ENCODE measurements at regions of chr13 and their contacts with region 1.

Region 1: DNA sequence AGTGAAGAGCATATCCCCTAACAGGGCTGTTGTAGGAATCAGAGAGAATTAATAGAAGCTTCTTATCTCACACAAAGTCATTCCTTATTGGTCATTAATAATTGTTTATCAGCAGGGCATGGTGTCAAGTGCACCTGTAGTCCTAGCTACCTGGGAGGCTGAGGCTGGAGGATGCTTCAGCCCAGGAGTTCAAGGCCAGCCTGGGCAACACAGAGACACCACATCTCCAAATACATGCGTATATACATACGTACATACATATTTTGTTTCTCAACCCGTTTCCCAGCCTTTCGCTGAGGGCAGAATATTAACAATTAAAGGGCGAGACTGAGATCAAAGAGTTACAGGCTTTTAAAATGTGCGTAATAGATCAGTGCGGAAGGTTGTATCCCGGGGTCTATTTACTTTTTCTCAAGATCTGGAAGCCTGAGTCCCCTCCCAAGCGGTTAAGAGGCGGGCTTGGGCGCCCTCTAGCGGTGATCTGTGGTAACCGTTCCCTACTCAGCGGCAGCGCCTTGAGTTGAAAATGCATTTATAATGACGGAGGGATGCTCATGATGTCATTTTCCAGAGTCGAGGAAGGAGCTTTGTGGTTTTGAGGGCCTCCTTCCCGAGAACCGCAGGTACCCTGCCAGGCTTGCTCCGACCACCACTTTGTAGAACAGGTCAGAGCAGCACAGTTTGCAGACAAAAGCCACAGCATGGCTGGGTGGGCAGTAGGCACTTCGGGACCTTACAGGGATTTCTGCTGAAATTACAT is 169.6 kb upstream of the GPR12 start:
- DNase-seq: peak; percentile 78
- ATAC-seq: peak; percentile 71
- H3K4me3 Mint-ChIP-seq: no peak overlapping the region
- H3K27ac Mint-ChIP-seq: no peak overlapping the region
- H3K4me1 Mint-ChIP-seq: no peaks in the 10 kb centered on the region
- H3K27me3 Mint-ChIP-seq: peaks cover 10% of the 10 kb centered on the region
- CTCF ChIP-seq: peak; percentile 94

Region 2: GRCh38 chr13:26707122-26708006 is 222.8 kb before region 1 on chr13:
- CTCF ChIA-PET with region 1: interaction called, 3 read pairs
- POLR2A ChIA-PET with region 1: no interaction called
- intact Hi-C with region 1: loop called (anchors 5 kb)
- DNase-seq: peak; percentile 69
- ATAC-seq: peak; percentile 89
- H3K4me3 Mint-ChIP-seq: no peak overlapping the region
- H3K27ac Mint-ChIP-seq: no peak overlapping the region
- H3K4me1 Mint-ChIP-seq: peaks cover 7% of the 10 kb centered on the region
- H3K27me3 Mint-ChIP-seq: no peaks in the 10 kb centered on the region
- CTCF ChIP-seq: peak; percentile 69

Region 3: GRCh38 chr13:26749285-26749684 is 180.9 kb before region 1 on chr13:
- CTCF ChIA-PET with region 1: no interaction called
- POLR2A ChIA-PET with region 1: no interaction called
- intact Hi-C with region 1: no loop called
- DNase-seq: no peak
- ATAC-seq: peak; percentile 61
- H3K4me3 Mint-ChIP-seq: no peak overlapping the region
- H3K27ac Mint-ChIP-seq: no peak overlapping the region
- H3K4me1 Mint-ChIP-seq: peaks cover 6% of the 10 kb centered on the region
- H3K27me3 Mint-ChIP-seq: peaks cover 18% of the 10 kb centered on the region
- CTCF ChIP-seq: no peak

Region 4: GRCh38 chr13:26872525-26873385 is 57.4 kb before region 1 on chr13:
- CTCF ChIA-PET with region 1: interaction called, 13 read pairs
- POLR2A ChIA-PET with region 1: no interaction called
- intact Hi-C with region 1: no loop called
- DNase-seq: peak; percentile 80
- ATAC-seq: peak; percentile 65
- H3K4me3 Mint-ChIP-seq: no peak overlapping the region
- H3K27ac Mint-ChIP-seq: no peak overlapping the region
- H3K4me1 Mint-ChIP-seq: no peaks in the 10 kb centered on the region
- H3K27me3 Mint-ChIP-seq: no peaks in the 10 kb centered on the region
- CTCF ChIP-seq: peak; percentile 72

Region 5: DNA sequence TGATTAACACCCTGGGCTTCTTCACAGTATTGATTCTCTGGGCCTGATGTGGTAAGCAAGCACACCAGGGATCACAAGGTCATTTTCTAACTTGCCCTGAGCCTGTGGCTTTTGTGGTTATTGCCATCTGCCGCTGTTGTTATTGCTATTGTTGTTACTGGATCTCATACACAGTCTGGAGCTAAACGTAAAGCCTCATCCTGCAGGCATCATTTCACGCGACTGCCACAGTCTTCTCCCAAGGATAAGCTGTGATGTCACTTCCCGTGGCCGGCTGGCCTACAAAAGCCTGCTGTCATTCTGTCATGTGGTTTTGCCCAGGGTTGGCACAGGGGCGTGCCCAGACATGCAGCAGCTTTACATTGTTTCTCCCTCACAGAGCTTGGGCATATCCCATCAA is 15.5 kb before region 1 on chr13:
- CTCF ChIA-PET with region 1: interaction called, 25 read pairs
- POLR2A ChIA-PET with region 1: no interaction called
- intact Hi-C with region 1: no loop called
- DNase-seq: peak; percentile 27
- ATAC-seq: peak; percentile 45
- H3K4me3 Mint-ChIP-seq: no peak overlapping the region
- H3K27ac Mint-ChIP-seq: peak overlapping the region; percentile 43
- H3K4me1 Mint-ChIP-seq: peaks cover 7% of the 10 kb centered on the region
- H3K27me3 Mint-ChIP-seq: no peaks in the 10 kb centered on the region
- CTCF ChIP-seq: no peak

Region 6: DNA sequence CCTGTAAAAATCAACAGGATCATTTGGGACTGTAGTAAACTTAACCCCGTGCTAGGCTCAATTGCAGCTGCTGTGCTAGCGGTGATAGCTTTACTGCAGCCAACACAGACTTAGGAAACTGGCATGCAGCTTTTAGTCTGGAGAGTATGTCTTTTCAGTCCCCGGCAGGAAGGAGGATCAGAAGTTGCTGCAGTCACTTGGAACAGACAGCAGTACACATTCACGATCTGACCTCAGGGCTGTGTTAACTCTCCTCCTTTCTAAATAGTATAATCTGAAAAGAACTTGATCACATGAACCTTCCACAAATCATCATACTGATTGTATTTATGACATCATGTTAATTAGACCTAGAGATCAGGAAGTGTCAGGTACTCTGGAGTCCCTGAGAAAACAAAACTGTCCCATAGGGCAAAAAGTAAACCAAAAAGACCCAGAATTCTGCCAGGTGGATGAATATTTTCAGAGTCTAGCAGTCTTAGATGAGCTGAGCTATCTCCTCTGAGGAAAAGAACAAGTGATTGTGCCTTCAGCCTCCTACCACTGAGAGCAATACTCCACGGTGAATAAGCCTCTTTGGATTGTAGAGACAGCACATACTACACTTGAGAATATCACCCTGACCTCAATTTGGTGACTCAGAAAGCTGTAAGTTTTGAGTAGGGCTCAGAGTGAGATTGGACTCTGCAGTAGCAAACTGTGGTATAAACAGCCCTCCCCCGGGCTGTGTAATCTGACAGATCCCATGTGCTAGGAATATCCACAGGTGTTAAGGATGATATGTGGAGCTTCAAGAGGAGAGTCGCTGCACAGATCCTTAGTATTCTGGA is 11.4 kb after region 1 on chr13:
- CTCF ChIA-PET with region 1: interaction called, 19 read pairs
- POLR2A ChIA-PET with region 1: no interaction called
- intact Hi-C with region 1: no loop called
- DNase-seq: peak; percentile 22
- ATAC-seq: peak; percentile 96
- H3K4me3 Mint-ChIP-seq: no peak overlapping the region
- H3K27ac Mint-ChIP-seq: no peak overlapping the region
- H3K4me1 Mint-ChIP-seq: peaks cover 4% of the 10 kb centered on the region
- H3K27me3 Mint-ChIP-seq: peaks cover 3% of the 10 kb centered on the region
- CTCF ChIP-seq: no peak

Region 7: DNA sequence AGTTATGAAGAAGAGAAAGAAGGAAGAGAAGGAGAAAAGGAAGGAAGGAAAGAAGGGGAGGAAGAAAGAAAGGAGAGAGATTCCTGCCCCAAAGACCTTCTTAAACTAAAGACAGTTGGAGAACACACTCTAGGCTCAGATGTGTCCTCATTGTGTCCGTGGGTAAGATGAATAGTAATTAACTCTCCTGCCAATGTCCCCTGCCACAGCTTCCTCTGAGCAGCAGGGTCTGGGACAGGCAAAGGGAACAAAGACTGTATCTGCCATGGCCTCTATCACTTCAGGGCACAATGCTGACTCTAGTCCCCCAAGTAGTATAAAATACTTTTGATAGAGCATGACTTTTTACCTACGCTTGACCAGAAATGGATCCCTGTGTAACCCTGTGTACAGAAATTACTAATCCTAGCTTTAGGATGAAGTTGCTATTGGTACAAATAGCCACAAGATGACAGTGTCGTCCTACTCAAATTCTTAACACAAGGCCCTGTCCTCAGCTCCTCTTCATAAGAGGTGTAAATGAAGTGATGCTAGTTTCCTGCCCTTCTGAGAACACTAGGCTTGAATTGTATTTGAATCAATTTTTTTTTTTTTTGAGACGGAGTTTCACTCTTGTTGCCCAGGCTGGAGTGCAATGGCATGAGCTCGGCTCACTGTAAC is 16.7 kb after region 1 on chr13:
- CTCF ChIA-PET with region 1: interaction called, 19 read pairs
- POLR2A ChIA-PET with region 1: no interaction called
- intact Hi-C with region 1: no loop called
- DNase-seq: peak; percentile 6
- ATAC-seq: peak; percentile 80
- H3K4me3 Mint-ChIP-seq: no peak overlapping the region
- H3K27ac Mint-ChIP-seq: no peak overlapping the region
- H3K4me1 Mint-ChIP-seq: no peaks in the 10 kb centered on the region
- H3K27me3 Mint-ChIP-seq: peaks cover 1% of the 10 kb centered on the region
- CTCF ChIP-seq: peak; percentile 46

Region 8: DNA sequence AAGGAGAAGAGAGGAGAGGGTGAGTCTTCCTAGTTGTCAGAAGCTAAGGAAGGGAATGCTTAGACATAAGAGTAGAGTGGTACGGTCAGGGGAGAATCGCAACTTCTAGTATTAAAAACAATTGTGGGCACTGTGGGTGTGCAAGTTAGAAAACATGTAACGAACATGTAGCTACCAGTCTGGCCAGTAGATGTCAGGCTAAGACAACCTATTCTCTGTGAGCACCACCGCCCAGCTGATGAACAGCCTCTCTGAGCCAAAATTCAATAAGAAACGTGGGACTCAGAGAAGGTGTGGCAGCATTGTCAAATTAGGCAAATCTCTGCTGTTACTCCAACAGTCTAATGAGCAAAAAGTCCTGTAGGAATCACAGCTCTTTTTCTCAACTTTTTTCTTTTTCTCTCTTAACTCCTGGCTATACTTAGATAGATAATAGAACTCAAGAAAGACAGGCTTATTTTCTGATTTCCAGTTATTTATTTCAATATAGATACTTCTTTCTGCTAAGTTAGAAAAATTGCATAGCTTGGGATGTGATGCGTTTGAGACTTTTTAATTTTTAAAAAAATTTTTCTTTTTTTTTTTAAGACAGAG is 55.2 kb after region 1 on chr13:
- CTCF ChIA-PET with region 1: no interaction called
- POLR2A ChIA-PET with region 1: no interaction called
- intact Hi-C with region 1: no loop called
- DNase-seq: peak; percentile 86
- ATAC-seq: peak; percentile 90
- H3K4me3 Mint-ChIP-seq: no peak overlapping the region
- H3K27ac Mint-ChIP-seq: no peak overlapping the region
- H3K4me1 Mint-ChIP-seq: no peaks in the 10 kb centered on the region
- H3K27me3 Mint-ChIP-seq: peaks cover 11% of the 10 kb centered on the region
- CTCF ChIP-seq: peak; percentile 76